ENCODE measurements at regions of chr16 and their contacts with region 1.

Region 1: DNA sequence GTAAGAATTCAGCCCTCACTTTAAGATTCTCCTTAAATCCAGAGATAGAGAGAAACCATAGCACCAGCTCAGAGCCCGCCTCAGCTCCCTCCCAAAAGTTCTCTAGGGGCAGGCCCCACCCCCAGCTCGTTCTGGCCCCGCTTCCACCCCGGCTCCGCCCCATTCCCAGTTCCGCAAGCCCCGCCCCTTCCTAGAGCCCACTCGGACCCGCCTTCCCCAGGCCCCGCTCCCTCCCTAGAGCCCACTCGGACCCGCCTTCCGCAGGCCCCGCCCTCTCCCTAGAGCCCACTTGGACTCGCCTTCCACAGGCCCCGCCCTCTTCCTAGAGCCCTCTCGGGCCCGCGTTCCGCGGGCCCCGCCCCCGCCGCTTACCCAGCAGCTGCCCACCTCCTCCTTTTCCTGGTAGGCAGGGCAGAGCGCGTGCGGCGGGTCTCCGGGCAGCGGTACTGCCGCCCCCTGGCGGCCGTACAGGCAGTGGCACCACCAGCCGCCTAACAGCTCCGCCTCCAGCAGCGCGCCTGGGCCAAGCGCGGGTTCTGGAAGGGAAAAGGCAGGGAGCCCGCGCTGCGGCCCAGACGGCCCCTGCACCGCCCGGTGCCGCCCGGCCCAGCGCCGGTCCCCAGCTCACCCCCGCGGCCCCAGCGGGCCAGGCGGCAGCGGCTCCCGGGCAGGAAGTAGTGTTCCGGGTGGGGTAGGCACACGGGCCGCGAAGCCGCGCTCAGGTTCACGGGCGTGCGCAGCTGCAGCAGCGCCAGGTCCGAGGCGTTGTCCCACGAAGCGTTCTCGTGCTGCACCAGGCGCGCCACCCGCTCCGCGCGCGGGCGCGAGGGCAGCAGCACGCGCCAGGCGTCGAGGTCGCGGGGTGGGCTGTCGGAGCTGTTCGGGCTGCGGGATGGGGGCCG is 6.8 kb upstream of the PRSS8 start:
- DNase-seq: peak; percentile 99
- H3K4me3 ChIP-seq: peak overlapping the region; percentile 4 to 59 (median 49)
- H3K27ac ChIP-seq: peak overlapping the region; percentile 79 to 83 (median 80)
- H3K4me1 ChIP-seq: peaks cover 0 to 20% (median 17%) of the 10 kb centered on the region in 4 donors
- H3K27me3 ChIP-seq: peaks cover 0 to 12% (median 0%) of the 10 kb centered on the region in 3 donors
- CTCF ChIP-seq: peak; percentile 84 to 97 (median 92)
- EP300 ChIP-seq: peak in 1 of 4 donors; percentile 36
- POLR2A ChIP-seq: no peak

Region 2: DNA sequence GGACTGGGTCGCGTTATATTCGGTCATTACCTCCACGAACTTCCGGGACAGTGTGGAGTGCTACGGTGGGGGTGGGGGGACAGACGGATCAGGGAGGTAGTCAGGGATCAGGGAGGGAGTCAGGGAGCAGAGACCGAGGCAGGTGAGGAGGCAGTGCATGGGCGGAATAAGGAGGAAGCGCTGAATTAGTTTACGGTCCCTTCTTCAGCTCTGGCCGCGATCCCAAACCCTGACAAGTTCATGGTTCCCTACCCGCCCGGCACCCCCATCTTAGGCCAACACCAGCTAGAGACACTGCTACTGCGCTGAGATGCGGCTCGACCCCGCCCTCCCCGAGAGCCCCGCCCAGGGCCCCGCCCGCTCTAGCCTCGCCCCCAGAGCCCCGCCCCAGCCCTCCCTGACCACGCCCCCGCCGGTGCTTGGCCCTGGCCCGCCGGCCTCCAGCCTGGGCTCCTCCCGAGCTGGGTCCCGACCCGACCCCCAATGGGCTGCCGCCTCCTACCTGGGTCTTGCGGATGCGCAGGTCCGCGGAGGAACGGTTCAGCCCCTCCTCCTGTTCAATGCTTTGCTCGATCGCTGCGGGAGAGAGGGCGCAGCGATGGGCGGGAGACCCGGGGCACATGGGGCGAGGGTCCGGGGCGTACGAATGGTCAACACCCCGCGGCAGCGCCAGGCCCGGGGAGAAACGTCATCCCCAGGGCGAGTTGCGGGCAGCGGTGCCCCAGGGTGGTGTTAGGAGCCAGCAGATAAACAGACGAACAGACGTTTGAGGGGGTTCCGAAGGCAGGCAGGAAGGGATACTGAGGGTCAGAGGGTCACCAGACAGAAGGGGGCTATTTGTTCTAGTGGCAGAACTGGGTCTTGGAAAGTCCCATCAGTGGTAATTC is 145.1 kb before region 1 on chr16:
- intact Hi-C with region 1: loop called (anchors 5 kb)
- DNase-seq: peak; percentile 95
- H3K4me3 ChIP-seq: peak overlapping the region; percentile 49 to 66 (median 59)
- H3K27ac ChIP-seq: peak overlapping the region; percentile 81 to 87 (median 87)
- H3K4me1 ChIP-seq: peaks cover 0 to 19% (median 13%) of the 10 kb centered on the region in 4 donors
- H3K27me3 ChIP-seq: no peaks in the 10 kb centered on the region
- CTCF ChIP-seq: no peak
- EP300 ChIP-seq: no peak
- POLR2A ChIP-seq: peak in 1 of 2 donors; percentile 33

Region 3: GRCh38 chr16:31073968-31074813 is 68.2 kb before region 1 on chr16 and contains the starts of genes ZNF646 and ZNF668:
- intact Hi-C with region 1: loop called (anchors 2 kb)
- DNase-seq: peak; percentile 99
- H3K4me3 ChIP-seq: peak within 1 kb of the TSS; percentile 91 to 99 (median 97)
- H3K27ac ChIP-seq: peak within 1 kb of the TSS; percentile 93 to 97 (median 96)
- H3K4me1 ChIP-seq: peaks cover 0 to 31% (median 27%) of the 10 kb centered on the region in 4 donors
- H3K27me3 ChIP-seq: no peaks in the 10 kb centered on the region
- CTCF ChIP-seq: no peak
- EP300 ChIP-seq: peak in 1 of 4 donors; percentile 30
- POLR2A ChIP-seq: peak; percentile 45 to 57
- total RNA-seq, gene ZNF646: 8.3 to 12.2 (median 8.8) TPM
- total RNA-seq, gene ZNF668: 5.2 to 12.5 (median 7.7) TPM

Region 4: DNA sequence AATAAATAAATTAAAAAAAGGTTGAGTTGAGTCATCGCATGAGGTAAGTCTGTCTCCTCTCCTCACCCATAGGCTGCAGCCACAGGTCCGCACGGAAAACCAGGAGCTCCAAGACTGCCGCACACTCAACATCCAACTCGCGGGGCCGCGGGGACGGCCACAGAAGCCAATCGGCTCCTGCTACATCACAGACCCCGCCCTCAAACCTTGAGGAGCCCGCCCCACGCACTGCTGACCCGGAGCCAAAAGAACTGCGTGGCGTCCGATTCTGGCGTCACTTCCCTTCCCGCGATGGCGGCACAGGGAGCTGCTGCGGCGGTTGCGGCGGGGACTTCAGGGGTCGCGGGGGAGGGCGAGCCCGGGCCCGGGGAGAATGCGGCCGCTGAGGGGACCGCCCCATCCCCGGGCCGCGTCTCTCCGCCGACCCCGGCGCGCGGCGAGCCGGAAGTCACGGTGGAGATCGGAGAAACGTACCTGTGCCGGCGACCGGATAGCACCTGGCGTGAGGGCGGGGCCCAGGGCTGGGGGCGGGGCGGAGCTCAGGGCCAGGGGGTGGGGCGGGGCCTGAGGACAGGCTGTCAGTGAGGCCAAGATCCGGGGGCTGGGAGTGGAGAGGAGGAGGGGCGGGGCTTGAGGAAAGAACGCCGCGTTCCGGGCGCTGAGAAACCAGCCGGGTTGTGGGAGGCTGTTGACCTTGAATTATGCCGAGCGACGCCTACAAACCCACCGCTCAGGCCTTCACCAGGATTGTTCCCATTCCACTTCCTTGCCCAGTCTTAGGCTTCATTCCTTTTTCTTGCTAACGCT is 24.8 kb before region 1 on chr16 and contains the start of gene KAT8:
- intact Hi-C with region 1: loop called (anchors 1 kb)
- DNase-seq: peak; percentile 99
- H3K4me3 ChIP-seq: peak within 1 kb of the TSS; percentile 67 to 97 (median 90)
- H3K27ac ChIP-seq: peak within 1 kb of the TSS; percentile 92 to 98 (median 96)
- H3K4me1 ChIP-seq: peaks cover 0 to 31% (median 21%) of the 10 kb centered on the region in 4 donors
- H3K27me3 ChIP-seq: no peaks in the 10 kb centered on the region
- CTCF ChIP-seq: no peak
- EP300 ChIP-seq: peak in 3 of 4 donors; percentile 27 to 72 (median 38)
- POLR2A ChIP-seq: peak; percentile 60 to 83
- total RNA-seq, gene KAT8: 57.1 to 65.7 (median 62.5) TPM

Region 5: DNA sequence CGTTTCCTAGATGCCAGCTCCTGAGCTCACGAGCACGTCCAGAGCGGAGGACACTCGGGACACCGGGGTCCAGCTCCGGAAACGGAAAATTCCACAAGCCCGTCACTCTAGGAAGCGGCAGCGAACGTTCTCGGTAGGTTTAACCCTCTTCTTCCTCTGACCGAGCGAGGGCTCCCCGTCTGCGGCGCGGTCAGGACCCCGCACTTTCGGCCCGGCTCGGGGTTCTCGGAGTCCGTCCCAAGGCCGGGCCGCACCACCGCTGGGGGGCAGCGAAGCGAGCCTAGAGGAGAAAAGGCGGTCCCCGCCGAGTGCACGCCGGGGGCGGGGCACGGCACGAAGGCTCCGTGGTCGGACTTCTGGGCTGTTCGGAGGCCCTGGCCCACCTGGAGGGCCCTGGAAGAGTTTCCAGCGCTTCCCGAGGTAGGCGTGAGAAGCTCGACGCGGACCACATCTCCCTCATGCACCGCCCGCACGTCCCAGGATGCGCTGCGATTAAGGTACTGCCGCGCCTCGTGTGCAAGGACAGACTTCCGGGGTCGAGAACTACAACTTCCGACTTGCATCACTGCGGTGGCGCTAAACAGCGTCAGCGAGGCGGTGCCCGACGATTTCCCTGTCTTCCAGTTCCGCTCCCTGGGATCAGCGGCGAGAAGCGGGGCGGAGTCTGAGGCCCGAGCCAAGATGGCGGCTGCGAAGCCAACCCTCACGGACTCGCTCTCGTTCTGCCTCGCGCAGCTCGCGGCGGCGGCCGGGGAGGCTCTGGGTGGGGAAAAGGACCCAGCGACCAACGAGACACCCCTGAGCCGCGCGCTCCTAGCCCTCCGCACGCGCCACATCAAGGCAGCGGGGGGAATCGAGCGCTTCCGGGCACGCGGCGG is 316.7 kb after region 1 on chr16 and contains the start of gene ARMC5:
- intact Hi-C with region 1: loop called (anchors 5 kb)
- DNase-seq: peak; percentile 99
- H3K4me3 ChIP-seq: peak within 1 kb of the TSS; percentile 68 to 92 (median 76)
- H3K27ac ChIP-seq: peak within 1 kb of the TSS; percentile 97 to 100 (median 100)
- H3K4me1 ChIP-seq: peaks cover 0 to 52% (median 48%) of the 10 kb centered on the region in 4 donors
- H3K27me3 ChIP-seq: no peaks in the 10 kb centered on the region
- CTCF ChIP-seq: peak; percentile 33 to 60 (median 48)
- EP300 ChIP-seq: no peak
- POLR2A ChIP-seq: peak in 1 of 2 donors; percentile 52
- total RNA-seq, gene ARMC5: 3.9 to 9.5 (median 6.6) TPM

Measured in sigmoid colon (tissue), 7 donors.